ENCODE measurements at regions of chr12 and their contacts with region 1.

Region 1: GRCh38 chr12:11581179-11581755 is 68.2 kb upstream of the ETV6 start:
- DNase-seq: no peak
- H3K4me3 ChIP-seq: no peak overlapping the region
- CTCF ChIP-seq: peak; percentile 15

Region 2: GRCh38 chr12:11553871-11554533 is 27.3 kb before region 1 on chr12:
- CTCF ChIA-PET with region 1: interaction called, 27 read pairs
- POLR2A ChIA-PET with region 1: no interaction called
- DNase-seq: no peak
- H3K4me3 ChIP-seq: no peak overlapping the region
- CTCF ChIP-seq: peak; percentile 54

Region 3: GRCh38 chr12:11595080-11595479 is 13.8 kb after region 1 on chr12:
- CTCF ChIA-PET with region 1: interaction called, 31 read pairs
- POLR2A ChIA-PET with region 1: no interaction called
- DNase-seq: no peak
- H3K4me3 ChIP-seq: no peak overlapping the region
- CTCF ChIP-seq: no peak

Region 4: DNA sequence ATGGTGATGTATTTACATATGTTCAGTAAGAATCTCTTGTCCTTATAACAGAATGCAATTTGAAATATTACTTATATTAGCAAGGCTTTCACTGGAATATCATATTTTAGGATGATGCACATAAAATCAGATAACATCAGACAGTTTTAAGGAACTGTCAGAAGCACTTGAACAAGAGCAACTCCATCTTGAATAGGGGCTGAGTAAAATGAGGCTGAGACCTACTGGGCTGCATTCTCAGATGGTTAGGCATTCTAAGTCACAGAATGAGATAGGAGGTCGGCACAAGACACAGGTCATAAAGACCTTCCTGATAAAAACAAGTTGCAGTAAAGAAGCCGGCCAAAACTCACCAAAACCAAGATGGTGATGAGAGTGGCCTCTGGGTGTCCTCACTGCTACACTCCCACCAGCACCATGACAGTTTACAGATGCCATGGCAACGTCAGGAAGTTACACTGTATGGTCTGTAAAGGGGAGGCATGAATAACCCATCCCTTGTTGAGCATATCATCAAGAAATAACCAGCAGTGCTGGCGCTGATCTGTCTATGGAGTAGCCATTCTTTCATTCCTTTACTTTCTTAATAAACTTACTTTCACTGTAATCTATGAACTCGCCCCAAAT is 40.6 kb after region 1 on chr12:
- CTCF ChIA-PET with region 1: interaction called, 12 read pairs
- POLR2A ChIA-PET with region 1: no interaction called
- DNase-seq: no peak
- H3K4me3 ChIP-seq: no peak overlapping the region
- CTCF ChIP-seq: no peak

Region 5: DNA sequence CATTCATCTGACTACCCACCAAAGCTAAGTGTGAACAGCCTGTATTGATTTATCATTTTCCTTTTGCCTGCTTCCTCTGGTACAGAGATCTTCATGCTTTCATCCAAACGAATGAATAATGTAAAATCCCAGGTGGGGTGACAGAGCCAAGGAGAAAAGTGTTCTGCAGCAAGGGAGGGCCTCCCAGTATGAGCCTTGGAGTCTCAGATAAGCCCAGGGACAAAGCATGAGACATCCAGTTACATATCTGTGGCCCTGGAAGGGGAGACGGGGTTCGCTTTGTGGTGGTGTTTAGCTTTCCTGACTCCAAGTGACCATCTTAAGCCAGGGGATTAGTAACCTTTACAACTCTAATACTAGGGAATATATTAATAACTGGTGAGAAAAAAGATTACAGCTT is 245.3 kb after region 1 on chr12:
- CTCF ChIA-PET with region 1: interaction called, 10 read pairs
- POLR2A ChIA-PET with region 1: no interaction called
- DNase-seq: no peak
- H3K4me3 ChIP-seq: no peak overlapping the region
- CTCF ChIP-seq: no peak

Region 6: DNA sequence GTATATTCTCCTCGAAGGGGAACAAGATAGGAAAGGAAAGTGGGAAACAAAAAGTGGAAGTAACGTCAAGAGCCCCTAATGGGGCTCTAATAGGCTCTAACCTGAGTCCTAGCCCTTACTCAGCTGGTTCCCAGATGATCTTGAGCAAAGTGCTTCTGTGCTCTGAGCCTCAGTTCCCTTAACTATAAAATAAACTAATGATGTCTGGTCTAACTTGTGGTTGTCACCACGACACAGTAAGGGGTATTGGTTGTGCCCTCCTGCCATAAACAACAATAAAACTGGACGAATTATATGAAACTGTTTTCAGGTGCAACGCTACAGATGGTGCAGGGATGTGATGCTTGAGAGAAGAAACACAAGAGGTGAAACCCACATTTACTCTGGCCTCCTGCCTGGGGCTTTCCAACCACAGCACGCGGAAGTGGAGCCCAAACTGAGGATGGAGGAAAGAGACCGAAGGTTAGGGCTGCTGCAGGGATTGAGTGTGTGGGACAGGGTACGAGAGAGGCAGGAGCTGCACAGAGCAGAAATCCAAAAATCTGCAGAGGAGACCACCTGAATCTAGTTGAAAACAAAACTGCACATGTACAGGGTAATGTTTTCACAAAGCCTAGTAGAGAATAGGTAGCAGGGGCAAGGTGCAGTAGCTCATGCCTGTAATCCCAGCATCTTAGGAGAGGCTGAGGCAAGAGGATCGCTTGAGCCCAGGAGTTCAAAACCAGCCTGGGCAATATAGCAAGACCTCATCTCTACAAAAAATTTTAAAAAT is 443.8 kb after region 1 on chr12:
- CTCF ChIA-PET with region 1: interaction called, 25 read pairs
- POLR2A ChIA-PET with region 1: no interaction called
- DNase-seq: no peak
- H3K4me3 ChIP-seq: no peak overlapping the region
- CTCF ChIP-seq: no peak